Activated B cell treated with CpG ODN at 0.5 μM for 24 hours (primary cell): ENCODE measurements at regions of chr17 and their contacts with region 1.

Region 1: DNA sequence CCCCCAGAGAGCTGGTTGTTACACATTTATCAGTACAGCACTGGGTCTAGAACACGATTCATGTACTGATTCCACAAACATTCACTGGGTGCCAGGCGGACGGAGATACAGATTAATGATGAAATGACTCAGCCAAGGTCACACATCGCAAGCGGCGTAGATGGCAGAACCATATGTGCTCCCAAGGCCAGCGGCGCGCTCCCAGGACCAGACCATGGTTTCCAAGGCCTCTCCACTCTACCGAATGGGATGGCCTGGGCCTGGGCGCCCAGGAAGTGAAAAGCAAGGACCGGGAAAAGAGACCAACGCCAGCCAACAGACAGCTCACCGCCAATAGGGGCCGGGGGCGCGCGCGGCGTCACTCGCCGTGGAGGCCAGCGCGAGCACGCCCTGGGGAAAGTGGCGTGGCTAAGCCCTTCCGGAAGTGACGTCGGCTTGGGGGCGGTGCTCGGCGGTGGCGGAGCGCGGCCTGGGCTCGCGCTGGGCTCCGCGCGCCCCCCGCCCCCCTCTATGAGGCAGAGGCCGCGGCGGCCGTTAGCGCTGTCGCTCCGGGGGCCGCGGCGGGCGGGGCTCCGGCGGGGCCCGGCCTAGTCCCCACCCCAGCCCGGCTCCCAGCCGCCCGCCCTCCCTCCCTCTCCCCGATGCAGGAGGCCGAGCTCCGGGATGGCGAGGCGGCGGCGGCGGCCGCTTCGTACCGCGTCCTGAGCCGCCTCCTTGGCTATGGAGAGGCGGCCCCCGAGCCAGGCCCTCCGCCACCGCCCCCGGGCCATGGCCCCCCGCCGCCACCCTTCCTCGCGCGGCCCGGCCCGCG is at the start of gene SOCS7:
- DNase-seq: peak; percentile 97
- ATAC-seq: peak; percentile 89
- H3K4me3 Mint-ChIP-seq: peak within 1 kb of the TSS; percentile 98
- H3K27ac Mint-ChIP-seq: peak within 1 kb of the TSS; percentile 97
- H3K4me1 Mint-ChIP-seq: peaks cover 26% of the 10 kb centered on the region
- H3K27me3 Mint-ChIP-seq: no peaks in the 10 kb centered on the region
- CTCF ChIP-seq: no peak
- total RNA-seq, gene SOCS7: 12.8 and 14.0 TPM in 2 replicates

Region 2: GRCh38 chr17:38415250-38416194 is 63.9 kb after region 1 on chr17:
- CTCF ChIA-PET with region 1: interaction called, 173 read pairs
- POLR2A ChIA-PET with region 1: interaction called, 10 read pairs
- intact Hi-C with region 1: loop called (anchors 1 kb)
- DNase-seq: no peak
- ATAC-seq: peak; percentile 26
- H3K4me3 Mint-ChIP-seq: no peak overlapping the region
- H3K27ac Mint-ChIP-seq: no peak overlapping the region
- H3K4me1 Mint-ChIP-seq: peaks cover 17% of the 10 kb centered on the region
- H3K27me3 Mint-ChIP-seq: peaks cover 27% of the 10 kb centered on the region
- CTCF ChIP-seq: no peak

Region 3: DNA sequence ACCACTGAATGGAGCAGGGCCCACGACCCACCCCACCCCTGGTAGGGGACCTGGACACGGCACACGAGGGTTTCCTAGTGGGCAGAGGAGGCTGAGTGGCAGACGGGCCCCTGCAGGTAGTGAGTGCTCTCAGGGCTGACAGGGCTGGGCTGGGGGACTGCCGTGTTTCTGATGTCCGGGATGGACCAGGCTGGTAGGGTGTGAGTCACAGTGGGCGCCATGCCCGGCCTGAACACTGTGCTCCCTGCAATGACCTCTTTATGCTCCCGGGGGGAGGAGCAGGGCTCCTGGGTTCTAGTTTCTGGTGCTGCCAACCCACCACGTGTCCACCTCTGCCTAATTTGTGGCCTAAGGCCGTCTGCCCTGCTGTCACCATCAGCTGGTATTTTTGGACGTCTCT is 102.9 kb after region 1 on chr17:
- CTCF ChIA-PET with region 1: no interaction called
- POLR2A ChIA-PET with region 1: no interaction called
- intact Hi-C with region 1: no loop called
- DNase-seq: no peak
- ATAC-seq: no peak
- H3K4me3 Mint-ChIP-seq: no peak overlapping the region
- H3K27ac Mint-ChIP-seq: no peak overlapping the region
- H3K4me1 Mint-ChIP-seq: peaks cover 9% of the 10 kb centered on the region
- H3K27me3 Mint-ChIP-seq: peaks cover 34% of the 10 kb centered on the region
- CTCF ChIP-seq: no peak

Region 4: DNA sequence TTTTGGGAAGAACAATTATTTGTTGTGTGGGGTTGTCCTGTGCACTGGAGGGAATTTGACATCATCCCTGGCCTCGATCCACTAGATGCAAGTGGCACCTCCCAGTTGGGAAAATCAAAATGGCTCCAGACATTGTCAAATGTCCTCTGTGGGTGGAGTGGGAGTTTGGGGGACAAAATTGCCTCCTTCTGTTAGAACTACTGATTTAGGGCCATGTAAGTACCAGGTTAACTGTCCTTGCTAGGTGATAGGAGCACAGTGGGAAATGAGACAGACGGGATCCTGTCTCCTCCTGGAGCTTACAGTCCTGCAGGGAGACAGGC is 133.5 kb after region 1 on chr17:
- CTCF ChIA-PET with region 1: no interaction called
- POLR2A ChIA-PET with region 1: interaction called, 7 read pairs
- intact Hi-C with region 1: loop called (anchors 1 kb)
- DNase-seq: no peak
- ATAC-seq: no peak
- H3K4me3 Mint-ChIP-seq: peak overlapping the region; percentile 73
- H3K27ac Mint-ChIP-seq: peak overlapping the region; percentile 74
- H3K4me1 Mint-ChIP-seq: peaks cover 15% of the 10 kb centered on the region
- H3K27me3 Mint-ChIP-seq: peaks cover 1% of the 10 kb centered on the region
- CTCF ChIP-seq: no peak

Region 5: GRCh38 chr17:38498186-38498752 is 146.7 kb after region 1 on chr17:
- CTCF ChIA-PET with region 1: no interaction called
- POLR2A ChIA-PET with region 1: no interaction called
- intact Hi-C with region 1: loop called (anchors 2 kb)
- DNase-seq: no peak
- ATAC-seq: no peak
- H3K4me3 Mint-ChIP-seq: no peak overlapping the region
- H3K27ac Mint-ChIP-seq: no peak overlapping the region
- H3K4me1 Mint-ChIP-seq: no peaks in the 10 kb centered on the region
- H3K27me3 Mint-ChIP-seq: peaks cover 3% of the 10 kb centered on the region
- CTCF ChIP-seq: no peak

Region 6: DNA sequence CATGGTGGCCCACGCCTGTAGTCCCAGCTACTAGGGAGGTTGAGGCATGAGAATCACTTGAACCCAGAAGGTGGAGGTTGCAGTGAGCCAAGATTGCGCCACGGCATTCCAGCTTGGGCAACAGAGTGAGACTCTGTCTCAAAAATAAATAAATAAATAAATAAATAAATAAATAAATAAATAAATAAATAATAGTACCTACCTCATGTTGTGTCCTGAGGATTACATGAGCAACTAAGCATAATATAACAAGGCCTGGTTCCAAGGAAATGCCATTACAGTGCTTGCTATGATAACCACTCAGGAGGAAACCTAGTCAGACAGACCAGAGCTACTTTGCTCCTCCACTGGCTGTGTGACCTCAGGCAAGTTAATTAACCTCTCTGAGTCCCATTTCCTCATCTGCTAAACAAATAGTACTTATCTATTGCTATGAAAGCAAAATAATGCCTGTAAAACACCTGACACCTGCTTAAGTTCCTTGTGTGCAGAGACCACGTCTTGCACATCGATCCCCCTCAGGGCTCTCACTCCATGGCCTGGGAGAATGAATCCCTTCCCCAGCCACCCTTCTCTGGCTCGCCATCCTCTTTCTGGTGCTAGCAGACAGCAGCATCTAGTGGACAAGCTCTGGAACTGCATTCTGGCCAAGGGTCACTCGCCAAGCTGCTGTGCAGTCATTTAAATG is 315.6 kb after region 1 on chr17:
- CTCF ChIA-PET with region 1: interaction called, 4 read pairs
- POLR2A ChIA-PET with region 1: no interaction called
- intact Hi-C with region 1: loop called (anchors 2 kb)
- DNase-seq: peak; percentile 39
- ATAC-seq: peak; percentile 87
- H3K4me3 Mint-ChIP-seq: no peak overlapping the region
- H3K27ac Mint-ChIP-seq: no peak overlapping the region
- H3K4me1 Mint-ChIP-seq: peaks cover 8% of the 10 kb centered on the region
- H3K27me3 Mint-ChIP-seq: peaks cover 57% of the 10 kb centered on the region
- CTCF ChIP-seq: peak; percentile 92